ENCODE measurements at regions of chr21 and their contacts with region 1.

Region 1: GRCh38 chr21:36989699-36990507 is 16.6 kb upstream of the RIPPLY3 start:
- DNase-seq: peak; percentile 89
- H3K4me3 Mint-ChIP-seq: peak overlapping the region; percentile 83
- H3K27ac Mint-ChIP-seq: peak overlapping the region; percentile 78
- H3K4me1 Mint-ChIP-seq: peaks cover 38% of the 10 kb centered on the region
- H3K27me3 Mint-ChIP-seq: no peaks in the 10 kb centered on the region

Region 2: DNA sequence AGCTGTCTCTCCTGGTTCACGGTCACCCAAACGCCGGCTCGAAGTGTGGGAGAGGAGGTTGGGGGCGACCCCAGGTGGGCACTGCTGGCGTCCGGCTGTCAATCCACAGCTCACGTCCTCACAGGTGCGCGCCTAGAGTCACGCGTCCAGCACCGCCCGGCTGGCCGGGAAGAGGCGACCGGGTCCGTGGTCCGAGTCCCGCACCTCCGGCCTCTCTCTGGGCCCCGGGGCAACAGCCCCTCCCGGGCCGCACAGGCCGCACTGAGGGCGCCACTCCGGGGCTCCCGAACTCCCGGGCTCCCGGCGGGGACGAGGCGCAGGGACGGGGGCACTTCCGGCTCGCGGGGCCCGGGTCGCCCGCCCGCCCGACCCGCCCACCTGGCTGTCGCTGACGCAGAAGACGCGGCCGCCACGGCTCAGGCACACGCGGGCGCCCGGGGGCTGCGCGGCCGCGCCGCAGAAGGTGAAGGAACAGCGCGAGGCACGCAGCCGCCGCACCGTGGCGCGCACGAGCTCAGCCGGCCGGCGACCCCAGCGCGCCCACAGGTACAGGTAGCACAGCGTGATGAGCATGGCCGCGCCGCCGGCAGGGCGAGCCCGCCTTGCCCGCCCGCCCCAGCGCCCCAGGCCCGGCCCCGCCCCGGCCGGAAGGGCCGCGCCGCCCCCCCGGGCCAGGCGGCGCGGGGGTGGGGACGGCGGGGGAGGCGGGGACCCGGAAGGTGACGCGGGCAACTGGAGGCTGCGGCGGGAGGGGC is 23.7 kb before region 1 on chr21 and contains the start of gene HLCS:
- CTCF ChIA-PET with region 1: interaction called, 10 read pairs
- POLR2A ChIA-PET with region 1: interaction called, 28 read pairs
- DNase-seq: peak; percentile 81
- H3K4me3 Mint-ChIP-seq: peak within 1 kb of the TSS; percentile 73
- H3K27ac Mint-ChIP-seq: peak within 1 kb of the TSS; percentile 77
- H3K4me1 Mint-ChIP-seq: peaks cover 23% of the 10 kb centered on the region
- H3K27me3 Mint-ChIP-seq: no peaks in the 10 kb centered on the region
- total RNA-seq, gene HLCS: 13.3 to 13.9 TPM

Region 3: GRCh38 chr21:36976882-36977651 is 12.8 kb before region 1 on chr21:
- CTCF ChIA-PET with region 1: interaction called, 32 read pairs
- POLR2A ChIA-PET with region 1: interaction called, 7 read pairs
- DNase-seq: peak; percentile 31
- H3K4me3 Mint-ChIP-seq: no peak overlapping the region
- H3K27ac Mint-ChIP-seq: peak overlapping the region; percentile 29
- H3K4me1 Mint-ChIP-seq: peaks cover 25% of the 10 kb centered on the region
- H3K27me3 Mint-ChIP-seq: peaks cover 10% of the 10 kb centered on the region

Region 4: GRCh38 chr21:37000381-37000780 is 10.5 kb after region 1 on chr21:
- CTCF ChIA-PET with region 1: interaction called, 22 read pairs
- POLR2A ChIA-PET with region 1: interaction called, 7 read pairs
- DNase-seq: no peak
- H3K4me3 Mint-ChIP-seq: no peak overlapping the region
- H3K27ac Mint-ChIP-seq: no peak overlapping the region
- H3K4me1 Mint-ChIP-seq: peaks cover 10% of the 10 kb centered on the region
- H3K27me3 Mint-ChIP-seq: peaks cover 2% of the 10 kb centered on the region

Region 5: GRCh38 chr21:37009740-37010341 is 19.9 kb after region 1 on chr21:
- CTCF ChIA-PET with region 1: interaction called, 10 read pairs
- POLR2A ChIA-PET with region 1: no interaction called
- DNase-seq: peak; percentile 80
- H3K4me3 Mint-ChIP-seq: peak overlapping the region; percentile 58
- H3K27ac Mint-ChIP-seq: no peak overlapping the region
- H3K4me1 Mint-ChIP-seq: peaks cover 14% of the 10 kb centered on the region
- H3K27me3 Mint-ChIP-seq: peaks cover 28% of the 10 kb centered on the region